Ovary (tissue), 10 donors: ENCODE measurements at regions of chr2 and their contacts with region 1.

Region 1: DNA sequence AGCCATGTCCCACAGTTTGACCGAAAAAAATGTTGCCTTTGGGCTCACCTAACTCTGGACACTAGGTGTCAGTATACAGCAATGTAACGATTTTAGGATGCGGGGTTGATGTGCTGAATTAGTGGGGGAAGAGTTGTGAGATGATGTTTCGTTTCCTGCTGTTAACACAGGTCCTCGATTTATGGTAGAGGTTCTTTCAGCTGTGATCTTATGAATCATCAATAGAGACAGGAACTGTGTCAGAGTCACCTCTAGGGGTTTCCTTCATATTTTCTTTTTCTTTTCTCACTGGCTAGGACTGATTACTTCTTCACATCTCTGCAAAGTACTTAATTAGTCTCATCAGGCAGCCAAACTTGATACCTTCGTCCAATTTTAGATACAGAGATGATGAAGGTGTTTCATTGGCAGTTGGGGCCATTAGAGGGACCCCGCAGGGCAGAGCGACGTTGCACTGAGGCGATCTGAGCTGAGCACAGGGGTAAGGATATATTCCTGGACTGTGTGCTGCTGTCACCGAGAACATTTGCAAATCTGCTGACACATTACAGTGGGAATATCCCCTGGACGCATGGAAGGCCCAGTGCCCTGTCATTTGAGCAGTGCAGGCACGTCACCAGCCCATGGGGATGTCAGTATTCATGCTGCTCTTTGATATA is 10.2 kb upstream of the MMADHC start:
- DNase-seq: peak in 4 of 5 donors; percentile 9 to 39 (median 18)
- H3K4me3 ChIP-seq: no peak overlapping the region
- H3K27ac ChIP-seq: no peak overlapping the region
- H3K4me1 ChIP-seq: peaks cover 3% of the 10 kb centered on the region
- H3K27me3 ChIP-seq: no peaks in the 10 kb centered on the region
- CTCF ChIP-seq: peak; percentile 44 to 72 (median 57)
- EP300 ChIP-seq: no peak
- POLR2A ChIP-seq: no peak

Region 2: GRCh38 chr2:150487537-150488429 is 890.0 kb after region 1 on chr2 and contains the start of gene RND3:
- intact Hi-C with region 1: loop called (anchors 5 to 10 kb)
- DNase-seq: peak; percentile 85 to 95 (median 92)
- H3K4me3 ChIP-seq: peak within 1 kb of the TSS; percentile 64
- H3K27ac ChIP-seq: peak within 1 kb of the TSS; percentile 28 to 55
- H3K4me1 ChIP-seq: peaks cover 1% of the 10 kb centered on the region
- H3K27me3 ChIP-seq: no peaks in the 10 kb centered on the region
- CTCF ChIP-seq: peak; percentile 22 to 86 (median 69)
- EP300 ChIP-seq: no peak
- POLR2A ChIP-seq: peak; percentile 76
- total RNA-seq, gene RND3: 2.5 to 23.0 (median 11.2) TPM

Region 3: GRCh38 chr2:151238527-151239487 is 1641.0 kb after region 1 on chr2:
- intact Hi-C with region 1: loop called (anchors 5 to 10 kb)
- DNase-seq: peak; percentile 26 to 67 (median 45)
- H3K4me3 ChIP-seq: no peak overlapping the region
- H3K27ac ChIP-seq: no peak overlapping the region
- H3K4me1 ChIP-seq: no peaks in the 10 kb centered on the region
- H3K27me3 ChIP-seq: no peaks in the 10 kb centered on the region
- CTCF ChIP-seq: peak; percentile 54 to 79 (median 74)
- EP300 ChIP-seq: no peak
- POLR2A ChIP-seq: no peak